ENCODE measurements at regions of chr12 and their contacts with region 1.

Region 1: DNA sequence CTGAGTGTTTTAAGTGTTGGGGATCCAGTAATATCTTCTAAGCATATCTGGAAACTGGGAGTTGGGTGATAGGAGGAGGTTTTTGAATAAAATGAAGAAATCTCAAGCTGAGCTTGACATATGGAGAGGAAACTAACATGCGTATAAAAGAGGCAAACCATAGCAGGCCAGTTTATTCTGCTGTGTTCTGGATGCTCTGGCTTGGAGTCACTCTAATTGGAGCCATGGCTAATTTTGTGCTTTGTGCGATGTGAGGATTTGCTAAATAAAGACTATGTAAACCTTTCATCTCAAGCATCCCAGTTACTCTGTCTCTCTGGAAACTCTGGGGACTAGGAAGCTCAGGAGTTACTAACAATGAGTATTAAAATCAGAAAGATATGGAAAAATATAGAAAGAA is 66.5 kb downstream of the ATF7IP start:
- DNase-seq: no peak
- ATAC-seq: no peak
- H3K4me3 ChIP-seq: no peak overlapping the region
- H3K4me3 Mint-ChIP-seq: peak overlapping the region in 7 of 10 donors; percentile 5 to 56 (median 25)
- H3K27ac ChIP-seq: no peak overlapping the region
- H3K27ac Mint-ChIP-seq: peak overlapping the region in 7 of 9 donors; percentile 14 to 70 (median 46)
- H3K4me1 ChIP-seq: peaks cover 22 to 42% of the 10 kb centered on the region in 2 donors
- H3K4me1 Mint-ChIP-seq: peaks cover 46 to 77% (median 63%) of the 10 kb centered on the region in 7 donors
- H3K27me3 ChIP-seq: no peaks in the 10 kb centered on the region
- H3K27me3 Mint-ChIP-seq: no peaks in the 10 kb centered on the region

Region 2: GRCh38 chr12:12837025-12837872 is 1594.7 kb before region 1 on chr12:
- CTCF ChIA-PET with region 1: no interaction called
- POLR2A ChIA-PET with region 1: no interaction called
- intact Hi-C with region 1: no loop called
- DNase-seq: peak in 8 of 9 donors; percentile 34 to 68 (median 52)
- ATAC-seq: peak; percentile 80
- H3K4me3 ChIP-seq: no peak overlapping the region
- H3K4me3 Mint-ChIP-seq: peak overlapping the region; percentile 15 to 74 (median 35)
- H3K27ac ChIP-seq: no peak overlapping the region
- H3K27ac Mint-ChIP-seq: peak overlapping the region; percentile 40 to 95 (median 85)
- H3K4me1 ChIP-seq: peaks cover 0 to 26% of the 10 kb centered on the region in 2 donors
- H3K4me1 Mint-ChIP-seq: peaks cover 11 to 37% (median 34%) of the 10 kb centered on the region in 7 donors
- H3K27me3 ChIP-seq: no peaks in the 10 kb centered on the region
- H3K27me3 Mint-ChIP-seq: no peaks in the 10 kb centered on the region

Region 3: GRCh38 chr12:14443531-14443930 is 11.6 kb after region 1 on chr12:
- CTCF ChIA-PET with region 1: no interaction called
- POLR2A ChIA-PET with region 1: no interaction called
- intact Hi-C with region 1: loop called in 1 of 2 experiments (anchors 1 kb)
- DNase-seq: no peak
- ATAC-seq: no peak
- H3K4me3 ChIP-seq: no peak overlapping the region
- H3K4me3 Mint-ChIP-seq: no peak overlapping the region
- H3K27ac ChIP-seq: no peak overlapping the region
- H3K27ac Mint-ChIP-seq: peak overlapping the region in 5 of 9 donors; percentile 11 to 85 (median 51)
- H3K4me1 ChIP-seq: no peaks in the 10 kb centered on the region
- H3K4me1 Mint-ChIP-seq: peaks cover 17 to 51% (median 42%) of the 10 kb centered on the region in 7 donors
- H3K27me3 ChIP-seq: no peaks in the 10 kb centered on the region
- H3K27me3 Mint-ChIP-seq: no peaks in the 10 kb centered on the region